ENCODE measurements at regions of chr7 and their contacts with region 1.

Region 1: DNA sequence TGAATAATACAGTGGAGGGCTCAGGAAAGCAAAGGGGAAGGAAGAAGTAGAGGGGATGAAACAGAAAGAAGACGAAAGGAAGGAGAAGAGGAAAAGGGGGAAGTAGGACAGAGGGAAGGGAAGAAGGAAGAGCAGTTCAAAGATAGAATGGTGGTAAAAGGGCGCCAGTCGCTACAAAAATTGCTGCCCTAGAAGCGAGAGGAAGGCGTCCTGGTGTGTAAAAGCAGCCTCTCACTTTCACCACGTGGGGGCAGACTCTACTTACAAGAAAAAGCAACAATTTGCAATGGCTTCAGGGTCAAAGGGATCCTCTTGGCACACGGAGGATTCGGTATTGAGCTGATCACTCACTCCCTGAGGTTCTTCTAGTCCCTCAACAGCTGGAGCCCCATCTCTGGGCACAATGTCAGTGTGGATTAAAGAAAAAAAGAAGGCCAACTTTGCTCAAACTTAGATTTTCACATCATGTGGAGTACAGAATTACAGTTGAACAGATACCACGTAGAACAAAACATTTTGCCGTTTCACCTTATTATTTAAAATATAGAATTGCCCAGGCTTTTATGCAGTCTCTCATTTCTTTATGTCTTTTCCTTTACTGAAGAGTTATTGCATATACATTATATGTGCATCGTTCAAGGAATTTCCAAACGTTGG is 31.4 kb upstream of the NPVF start:
- DNase-seq: peak; percentile 52
- H3K4me3 ChIP-seq: no peak overlapping the region
- H3K27ac ChIP-seq: no peak overlapping the region
- H3K4me1 ChIP-seq: peaks cover 13% of the 10 kb centered on the region
- H3K27me3 ChIP-seq: peaks cover 5% of the 10 kb centered on the region
- CTCF ChIP-seq: peak; percentile 87 to 92

Region 2: DNA sequence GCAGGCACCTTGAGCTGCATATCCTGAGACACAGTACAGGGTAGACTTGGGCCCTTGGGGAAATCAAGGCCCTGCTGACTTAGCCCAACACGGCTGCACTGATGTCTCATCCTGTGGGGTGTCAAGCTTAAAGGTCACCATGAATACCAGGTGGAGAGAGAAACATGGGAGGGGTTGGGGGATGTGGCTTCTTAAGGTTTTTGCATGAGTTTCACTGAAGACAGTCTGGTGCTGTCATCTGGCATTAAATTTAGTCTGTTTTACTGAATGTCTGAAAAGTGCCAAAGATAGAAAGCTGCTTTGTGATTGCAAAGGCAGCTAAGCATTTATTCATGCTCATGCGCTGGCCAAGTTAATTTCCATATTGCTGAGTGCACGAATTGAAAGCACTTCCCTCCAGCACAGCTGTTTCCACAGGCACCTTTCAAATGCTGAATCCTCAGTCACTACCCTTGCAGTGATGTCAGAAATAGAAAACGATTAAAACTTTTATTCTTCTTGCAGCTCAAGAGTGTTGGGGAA is 381.9 kb before region 1 on chr7:
- CTCF ChIA-PET with region 1: no interaction called
- dilution Hi-C with region 1: no loop called
- in situ Hi-C with region 1: no loop called
- intact Hi-C with region 1: no loop called
- DNase-seq: no peak
- H3K4me3 ChIP-seq: no peak overlapping the region
- H3K27ac ChIP-seq: no peak overlapping the region
- H3K4me1 ChIP-seq: peaks cover 4% of the 10 kb centered on the region
- H3K27me3 ChIP-seq: no peaks in the 10 kb centered on the region
- CTCF ChIP-seq: no peak

Region 3: DNA sequence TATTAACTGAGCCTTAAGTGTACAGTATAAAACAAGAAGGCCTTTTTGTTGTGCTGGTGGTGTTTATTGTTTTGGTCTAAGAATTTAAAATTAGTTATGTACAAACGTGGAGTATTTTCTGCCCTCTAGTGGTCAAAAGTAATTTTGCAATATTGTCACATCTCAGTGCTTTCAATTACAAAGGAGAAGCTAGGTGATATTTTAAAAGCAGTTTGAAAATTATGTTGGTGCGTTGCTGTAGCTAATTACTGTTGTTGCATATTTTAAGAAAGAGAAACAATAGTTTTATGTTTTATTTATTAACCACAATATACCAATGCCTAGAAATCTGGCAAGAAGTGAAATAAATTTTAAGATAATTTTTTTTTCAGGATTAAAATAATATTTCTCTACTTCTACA is 42.9 kb before region 1 on chr7:
- CTCF ChIA-PET with region 1: no interaction called
- dilution Hi-C with region 1: no loop called
- in situ Hi-C with region 1: no loop called
- intact Hi-C with region 1: no loop called
- DNase-seq: peak; percentile 20
- H3K4me3 ChIP-seq: no peak overlapping the region
- H3K27ac ChIP-seq: no peak overlapping the region
- H3K4me1 ChIP-seq: no peaks in the 10 kb centered on the region
- H3K27me3 ChIP-seq: peaks cover 5% of the 10 kb centered on the region
- CTCF ChIP-seq: peak; percentile 69 to 86

Region 4: DNA sequence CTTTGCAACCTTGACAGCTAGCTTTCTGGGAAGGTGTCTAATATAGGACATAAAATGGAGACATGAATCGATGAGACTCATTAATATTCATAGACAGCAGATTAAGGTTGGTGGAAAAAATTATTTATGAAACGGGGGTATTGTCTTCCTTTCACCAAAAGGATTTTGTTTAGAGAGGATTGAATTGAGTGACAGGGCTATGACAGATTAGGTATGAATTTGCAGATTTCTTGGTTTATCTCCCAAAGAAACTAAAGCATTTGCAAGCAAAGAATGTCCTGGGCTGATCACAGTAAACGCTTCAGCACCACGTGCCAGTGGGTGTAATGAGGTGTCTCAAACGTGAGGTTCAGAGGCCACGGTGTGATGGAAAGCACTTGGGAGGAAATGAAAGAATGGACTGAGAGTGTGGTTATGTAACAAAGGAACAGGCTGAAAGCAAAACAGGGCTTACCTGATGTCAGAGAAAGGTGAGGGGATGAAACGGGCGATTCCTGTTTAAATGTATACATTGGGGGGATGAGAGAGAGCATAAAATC is 297.7 kb after region 1 on chr7:
- CTCF ChIA-PET with region 1: no interaction called
- dilution Hi-C with region 1: no loop called
- in situ Hi-C with region 1: loop called (anchors 5 to 10 kb)
- intact Hi-C with region 1: no loop called
- DNase-seq: no peak
- H3K4me3 ChIP-seq: no peak overlapping the region
- H3K27ac ChIP-seq: no peak overlapping the region
- H3K4me1 ChIP-seq: no peaks in the 10 kb centered on the region
- H3K27me3 ChIP-seq: peaks cover 3% of the 10 kb centered on the region
- CTCF ChIP-seq: no peak

Region 5: GRCh38 chr7:25565949-25566348 is 306.2 kb after region 1 on chr7:
- CTCF ChIA-PET with region 1: no interaction called
- dilution Hi-C with region 1: no loop called
- in situ Hi-C with region 1: loop called (anchors 5 to 10 kb)
- intact Hi-C with region 1: loop called (anchors 1 kb)
- DNase-seq: peak; percentile 38
- H3K4me3 ChIP-seq: no peak overlapping the region
- H3K27ac ChIP-seq: no peak overlapping the region
- H3K4me1 ChIP-seq: no peaks in the 10 kb centered on the region
- H3K27me3 ChIP-seq: peaks cover 3% of the 10 kb centered on the region
- CTCF ChIP-seq: peak; percentile 100

Region 6: DNA sequence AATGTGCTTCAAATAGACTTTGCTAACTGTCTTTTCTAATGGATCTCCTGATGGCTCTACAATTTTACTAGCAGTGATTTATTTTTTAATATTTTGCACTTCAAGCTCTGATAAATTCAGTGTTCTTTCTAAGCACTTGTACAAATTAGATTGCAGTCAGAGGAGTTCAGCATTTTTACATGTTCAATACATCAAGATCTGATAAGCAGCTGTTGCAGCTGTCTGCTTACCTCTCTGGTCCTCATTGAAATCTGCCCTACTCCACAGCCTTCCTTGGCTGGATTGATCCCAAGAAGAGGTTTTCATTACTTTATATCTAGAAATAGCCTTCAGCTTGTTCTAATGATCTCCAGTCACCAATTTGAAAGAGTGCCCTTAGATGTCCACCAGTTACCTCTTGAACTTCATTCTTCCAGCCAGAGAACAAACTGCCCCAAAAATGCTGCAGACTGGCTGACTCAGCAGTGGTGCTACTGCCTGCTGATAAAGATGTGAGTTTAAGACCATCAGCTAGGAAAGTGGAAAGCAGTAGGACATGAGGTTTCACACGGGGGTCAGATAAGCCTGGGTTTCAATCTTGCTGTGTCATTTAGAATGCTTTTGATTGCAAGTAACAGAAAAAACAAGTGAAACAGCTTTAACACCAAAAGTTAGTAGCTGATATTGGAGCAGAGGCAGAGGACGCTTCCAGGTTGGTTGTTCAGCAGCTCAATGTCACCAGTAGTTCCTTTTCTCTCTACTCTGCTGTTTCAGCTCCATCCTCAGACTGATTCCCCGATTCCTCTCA is 319.5 kb after region 1 on chr7:
- CTCF ChIA-PET with region 1: no interaction called
- dilution Hi-C with region 1: no loop called
- in situ Hi-C with region 1: loop called in 1 of 2 experiments (anchors 10 kb)
- intact Hi-C with region 1: no loop called
- DNase-seq: no peak
- H3K4me3 ChIP-seq: no peak overlapping the region
- H3K27ac ChIP-seq: no peak overlapping the region
- H3K4me1 ChIP-seq: no peaks in the 10 kb centered on the region
- H3K27me3 ChIP-seq: no peaks in the 10 kb centered on the region
- CTCF ChIP-seq: no peak